Mammary epithelial cell (primary cell): ENCODE measurements at regions of chr15 and their contacts with region 1.

Region 1: DNA sequence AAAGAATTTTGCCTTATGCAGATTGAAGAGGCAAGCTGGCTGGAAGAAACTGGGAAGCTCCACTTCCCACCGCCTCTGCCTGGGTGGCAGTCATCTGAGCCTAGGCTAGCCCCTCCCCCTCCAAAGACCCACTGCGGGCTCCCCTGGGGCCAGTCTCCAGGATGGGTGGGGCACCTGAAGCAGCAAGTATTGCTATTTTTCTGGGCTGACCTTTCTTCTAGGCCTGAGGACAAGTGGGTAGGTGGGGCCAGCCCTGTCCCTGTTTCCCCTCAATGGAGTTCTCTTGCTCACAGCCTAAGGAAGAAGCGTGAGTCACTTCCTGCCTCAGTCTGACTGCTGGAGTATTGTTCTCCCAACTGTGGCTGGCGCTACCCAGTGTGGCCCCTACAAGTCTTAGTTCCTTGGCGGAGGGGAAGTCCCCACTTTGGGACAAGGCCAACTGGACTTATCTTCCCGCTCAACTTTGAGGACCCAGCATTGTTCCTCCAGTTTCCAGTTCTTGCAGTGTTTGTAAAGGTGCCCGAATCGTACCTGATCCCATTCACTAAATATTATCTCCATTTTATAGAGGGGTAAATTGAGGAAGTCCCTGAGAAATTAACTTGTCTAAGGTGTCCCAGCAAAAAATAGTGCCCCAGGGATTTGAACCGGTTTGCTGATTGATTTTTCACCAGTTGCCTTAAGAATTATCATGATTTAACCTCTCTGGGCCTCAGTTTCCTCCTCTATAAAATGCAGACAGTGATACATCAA is 1.4 kb downstream of the FURIN start:
- DNase-seq: peak; percentile 83
- H3K4me3 ChIP-seq: no peak overlapping the region
- H3K27ac ChIP-seq: peak overlapping the region; percentile 32
- H3K4me1 ChIP-seq: peaks cover 51% of the 10 kb centered on the region
- H3K27me3 ChIP-seq: no peaks in the 10 kb centered on the region
- CTCF ChIP-seq: no peak

Region 2: DNA sequence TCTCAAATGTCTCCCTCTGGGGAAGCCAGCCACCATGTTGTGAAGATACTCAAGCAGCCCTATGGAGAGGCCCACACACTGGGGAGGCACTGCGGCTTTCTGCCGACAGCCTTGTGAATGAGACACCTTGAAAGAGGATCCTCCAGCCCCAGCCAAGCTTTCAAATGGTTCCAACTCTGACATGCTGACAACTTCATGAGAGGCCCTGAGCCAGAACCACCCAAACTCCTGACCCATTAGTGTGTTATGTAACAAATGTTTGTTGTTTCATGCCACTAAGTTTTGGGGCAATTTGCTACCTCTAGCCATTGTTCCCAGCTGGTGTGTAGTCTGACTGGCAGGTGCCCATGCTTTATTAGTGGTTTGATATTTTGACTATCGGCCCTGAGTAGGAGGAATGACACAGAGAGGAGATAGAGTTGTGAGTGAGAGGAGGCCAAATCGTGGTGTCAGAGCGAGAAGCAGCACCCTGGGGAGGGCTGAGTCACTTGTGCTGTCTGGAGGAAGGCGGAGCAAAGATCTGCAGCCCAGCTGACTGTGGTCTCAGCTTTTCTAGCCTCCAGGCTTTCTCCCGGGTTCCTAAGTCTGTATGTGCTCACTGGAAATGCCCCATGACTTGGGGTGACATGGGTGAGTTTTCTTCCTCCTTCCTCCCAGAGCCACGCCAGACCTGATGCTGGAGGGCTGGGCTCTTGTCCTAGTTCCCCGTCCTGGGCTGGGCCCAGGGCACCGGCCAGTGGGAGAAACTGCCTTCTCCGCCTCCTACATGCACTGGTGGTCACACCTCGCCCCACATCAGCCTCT is 209.4 kb before region 1 on chr15:
- CTCF ChIA-PET with region 1: no interaction called
- dilution Hi-C with region 1: no loop called
- in situ Hi-C with region 1: no loop called
- intact Hi-C with region 1: loop called (anchors 5 kb)
- DNase-seq: peak; percentile 98
- H3K4me3 ChIP-seq: peak overlapping the region in 1 of 3 experiments; percentile 24
- H3K27ac ChIP-seq: peak overlapping the region; percentile 74
- H3K4me1 ChIP-seq: peaks cover 29% of the 10 kb centered on the region
- H3K27me3 ChIP-seq: no peaks in the 10 kb centered on the region
- CTCF ChIP-seq: no peak

Region 3: GRCh38 chr15:90716976-90717821 is 152.6 kb before region 1 on chr15 and contains the start of gene BLM:
- CTCF ChIA-PET with region 1: no interaction called
- dilution Hi-C with region 1: no loop called
- in situ Hi-C with region 1: no loop called
- intact Hi-C with region 1: loop called (anchors 2 kb)
- DNase-seq: peak; percentile 96
- H3K4me3 ChIP-seq: peak within 1 kb of the TSS; percentile 78 to 86 (median 83)
- H3K27ac ChIP-seq: peak within 1 kb of the TSS; percentile 56
- H3K4me1 ChIP-seq: peaks cover 17% of the 10 kb centered on the region
- H3K27me3 ChIP-seq: no peaks in the 10 kb centered on the region
- CTCF ChIP-seq: peak in 1 of 2 donors; percentile 36
- total RNA-seq, gene BLM: 0.83 to 9.2 TPM

Region 4: GRCh38 chr15:90774731-90775484 is 94.9 kb before region 1 on chr15:
- CTCF ChIA-PET with region 1: no interaction called
- dilution Hi-C with region 1: no loop called
- in situ Hi-C with region 1: no loop called
- intact Hi-C with region 1: loop called (anchors 5 kb)
- DNase-seq: peak; percentile 67
- H3K4me3 ChIP-seq: no peak overlapping the region
- H3K27ac ChIP-seq: no peak overlapping the region
- H3K4me1 ChIP-seq: peaks cover 11% of the 10 kb centered on the region
- H3K27me3 ChIP-seq: no peaks in the 10 kb centered on the region
- CTCF ChIP-seq: no peak